ENCODE measurements at regions of chr3 and their contacts with region 1.

Region 1: GRCh38 chr3:120417272-120417911 is 33.4 kb downstream of the FSTL1 start:
- DNase-seq: peak; percentile 89
- H3K4me3 ChIP-seq: peak overlapping the region; percentile 34 to 46; a peak in 3 of 4 replicates
- H3K27ac ChIP-seq: peak overlapping the region; percentile 96 to 98
- H3K4me1 ChIP-seq: peaks cover 23 to 27% of the 10 kb centered on the region in 2 experiments
- H3K27me3 ChIP-seq: no peaks in the 10 kb centered on the region
- CTCF ChIP-seq: peak; percentile 93
- EP300 ChIP-seq: peak in 1 of 2 experiments; percentile 80; a peak in 2 of 4 replicates
- RAD21 ChIP-seq: peak; percentile 92

Region 2: GRCh38 chr3:119084371-119085072 is 1332.9 kb before region 1 on chr3:
- CTCF ChIA-PET with region 1: no interaction called
- POLR2A ChIA-PET with region 1: no interaction called
- DNase-seq: no peak
- H3K4me3 ChIP-seq: no peak overlapping the region
- H3K27ac ChIP-seq: no peak overlapping the region
- H3K4me1 ChIP-seq: no peaks in the 10 kb centered on the region; a peak in 1 of 4 replicates
- H3K27me3 ChIP-seq: no peaks in the 10 kb centered on the region
- CTCF ChIP-seq: no peak
- EP300 ChIP-seq: no peak
- RAD21 ChIP-seq: no peak

Region 3: DNA sequence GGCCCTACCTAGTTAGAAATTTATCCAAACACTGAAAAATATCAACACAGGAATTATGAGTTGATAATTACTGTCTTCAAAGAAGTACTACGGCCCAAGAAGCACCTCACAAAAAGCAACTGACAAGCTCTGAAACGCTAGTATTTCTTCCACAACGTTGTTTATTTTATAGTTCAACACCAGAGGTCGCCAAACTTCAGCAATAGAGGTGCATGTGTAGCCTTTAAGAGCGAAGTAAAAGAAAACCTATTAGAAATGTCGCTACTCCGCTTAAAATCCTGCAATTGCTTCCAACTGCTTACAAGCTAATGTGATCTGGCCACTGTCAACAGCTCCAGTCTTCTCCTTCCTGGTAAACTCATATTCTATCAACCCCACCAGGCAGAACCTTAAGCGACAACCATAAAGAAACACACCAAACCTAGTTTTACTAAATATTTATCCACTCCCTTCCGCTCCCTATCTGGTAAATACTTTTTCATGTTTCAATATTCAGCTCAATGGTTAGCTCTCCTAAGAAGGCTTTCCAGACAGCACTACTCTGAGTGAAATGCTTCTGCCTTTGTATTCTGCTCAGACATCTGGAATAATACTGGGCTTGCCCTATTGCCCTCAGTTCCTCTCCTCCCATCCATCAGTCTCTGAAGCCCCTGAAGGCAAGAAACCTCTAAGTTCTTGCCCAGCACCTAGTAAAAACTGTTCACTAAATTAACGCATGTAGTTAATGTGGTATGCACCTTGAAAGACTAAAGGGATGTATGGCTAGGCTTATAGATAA is 525.3 kb before region 1 on chr3:
- CTCF ChIA-PET with region 1: interaction called, 37 read pairs
- POLR2A ChIA-PET with region 1: no interaction called
- DNase-seq: peak; percentile 23
- H3K4me3 ChIP-seq: no peak overlapping the region; a peak in 1 of 4 replicates
- H3K27ac ChIP-seq: no peak overlapping the region
- H3K4me1 ChIP-seq: no peaks in the 10 kb centered on the region; a peak in 1 of 4 replicates
- H3K27me3 ChIP-seq: no peaks in the 10 kb centered on the region
- CTCF ChIP-seq: peak; percentile 80
- EP300 ChIP-seq: no peak
- RAD21 ChIP-seq: peak; percentile 97

Region 4: DNA sequence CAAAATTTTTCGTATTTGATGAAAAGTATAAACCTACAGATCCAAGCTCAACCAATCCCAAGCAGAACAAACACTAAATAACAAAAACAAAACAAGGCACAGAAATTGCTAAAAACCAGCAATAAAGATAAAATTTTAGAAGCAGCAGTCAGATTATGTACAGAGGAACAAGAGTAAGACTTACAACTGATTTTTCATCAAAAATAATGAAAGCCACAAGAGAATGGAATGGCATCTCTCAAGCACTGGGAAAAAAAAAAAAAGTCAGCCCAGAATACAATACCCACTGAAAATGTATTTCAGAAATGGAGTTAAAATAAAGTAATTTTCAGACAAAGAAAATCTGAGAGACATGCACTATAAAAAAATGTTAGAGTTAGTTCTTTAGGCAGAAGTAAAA is 159.4 kb before region 1 on chr3:
- CTCF ChIA-PET with region 1: interaction called, 12 read pairs
- POLR2A ChIA-PET with region 1: no interaction called
- DNase-seq: no peak
- H3K4me3 ChIP-seq: no peak overlapping the region
- H3K27ac ChIP-seq: no peak overlapping the region
- H3K4me1 ChIP-seq: no peaks in the 10 kb centered on the region
- H3K27me3 ChIP-seq: no peaks in the 10 kb centered on the region
- CTCF ChIP-seq: no peak
- EP300 ChIP-seq: no peak
- RAD21 ChIP-seq: no peak

Region 5: DNA sequence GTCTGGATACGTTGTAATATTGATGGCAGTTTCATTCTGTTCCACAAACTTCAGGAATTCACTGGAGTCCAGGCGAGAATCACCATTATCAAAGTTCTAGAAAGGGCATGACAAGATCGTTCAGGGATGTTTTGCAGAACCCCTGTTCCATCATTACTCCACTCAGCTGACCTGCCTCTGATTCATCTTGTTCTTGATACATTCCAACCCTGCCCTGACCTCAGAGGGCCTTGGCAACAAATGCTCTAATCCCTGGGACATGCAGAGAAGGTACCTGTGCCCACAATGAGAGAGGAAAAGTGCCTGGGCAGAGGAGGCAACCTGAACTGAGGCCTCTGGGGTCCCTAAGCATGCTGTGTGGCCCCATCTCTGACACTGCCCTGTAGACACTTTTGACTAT is 12.5 kb before region 1 on chr3:
- CTCF ChIA-PET with region 1: interaction called, 46 read pairs
- POLR2A ChIA-PET with region 1: no interaction called
- DNase-seq: no peak
- H3K4me3 ChIP-seq: no peak overlapping the region
- H3K27ac ChIP-seq: no peak overlapping the region
- H3K4me1 ChIP-seq: no peaks in the 10 kb centered on the region; a peak in 1 of 4 replicates
- H3K27me3 ChIP-seq: no peaks in the 10 kb centered on the region
- CTCF ChIP-seq: no peak
- EP300 ChIP-seq: no peak
- RAD21 ChIP-seq: no peak

Region 6: DNA sequence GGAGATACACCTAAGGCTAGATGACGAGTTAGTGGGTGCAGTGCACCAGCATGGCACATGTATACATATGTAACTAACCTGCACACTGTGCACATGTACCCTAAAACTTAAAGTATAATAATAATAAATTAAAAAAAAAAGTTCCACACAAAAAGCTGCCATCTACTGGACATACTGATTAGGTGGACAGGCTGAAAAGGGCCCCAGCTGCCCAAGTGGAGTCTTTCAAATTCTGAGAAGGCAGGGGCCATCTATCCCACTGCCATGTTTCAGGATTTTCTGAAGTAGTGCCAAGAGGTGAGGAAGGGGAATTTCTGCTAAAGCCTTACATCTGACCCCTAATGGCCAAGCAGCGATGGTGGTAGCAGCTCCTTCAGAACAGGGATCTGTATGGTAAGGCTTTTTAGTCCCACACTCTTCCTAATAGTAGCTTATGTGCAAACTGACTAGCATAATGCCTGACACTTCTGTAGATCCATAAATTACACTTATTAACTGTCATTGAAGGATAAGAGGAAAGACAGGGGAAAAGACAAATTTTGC is 25.7 kb after region 1 on chr3:
- CTCF ChIA-PET with region 1: interaction called, 12 read pairs
- POLR2A ChIA-PET with region 1: no interaction called
- DNase-seq: no peak
- H3K4me3 ChIP-seq: no peak overlapping the region
- H3K27ac ChIP-seq: peak overlapping the region; percentile 13 to 43; a peak in 2 of 4 replicates
- H3K4me1 ChIP-seq: peaks cover 22 to 55% of the 10 kb centered on the region in 2 experiments
- H3K27me3 ChIP-seq: no peaks in the 10 kb centered on the region
- CTCF ChIP-seq: peak; percentile 57
- EP300 ChIP-seq: no peak
- RAD21 ChIP-seq: no peak

Region 7: GRCh38 chr3:120550546-120550945 is 133.2 kb after region 1 on chr3:
- CTCF ChIA-PET with region 1: interaction called, 269 read pairs
- POLR2A ChIA-PET with region 1: no interaction called
- DNase-seq: no peak
- H3K4me3 ChIP-seq: no peak overlapping the region
- H3K27ac ChIP-seq: no peak overlapping the region
- H3K4me1 ChIP-seq: no peaks in the 10 kb centered on the region; a peak in 1 of 4 replicates
- H3K27me3 ChIP-seq: no peaks in the 10 kb centered on the region
- CTCF ChIP-seq: no peak
- EP300 ChIP-seq: no peak
- RAD21 ChIP-seq: no peak